ENCODE measurements at regions of chr13 and their contacts with region 1.

Region 1: GRCh38 chr13:28067491-28067890 is 32.9 kb downstream of the FLT3 start:
- DNase-seq: no peak
- ATAC-seq: no peak
- H3K4me3 ChIP-seq: no peak overlapping the region
- H3K27ac ChIP-seq: no peak overlapping the region
- H3K4me1 ChIP-seq: no peaks in the 10 kb centered on the region
- H3K27me3 ChIP-seq: peaks cover 8% of the 10 kb centered on the region
- CTCF ChIP-seq: no peak
- POLR2A ChIP-seq: no peak
- RAD21 ChIP-seq: no peak

Region 2: GRCh38 chr13:27896726-27897125 is 170.8 kb before region 1 on chr13:
- CTCF ChIA-PET with region 1: no interaction called
- POLR2A ChIA-PET with region 1: no interaction called
- dilution Hi-C with region 1: no loop called
- in situ Hi-C with region 1: no loop called
- intact Hi-C with region 1: no loop called
- DNase-seq: no peak
- ATAC-seq: no peak
- H3K4me3 ChIP-seq: no peak overlapping the region
- H3K27ac ChIP-seq: no peak overlapping the region
- H3K4me1 ChIP-seq: no peaks in the 10 kb centered on the region
- H3K27me3 ChIP-seq: no peaks in the 10 kb centered on the region; the same call in none of the 2 replicates
- CTCF ChIP-seq: no peak
- POLR2A ChIP-seq: no peak
- RAD21 ChIP-seq: no peak

Region 3: DNA sequence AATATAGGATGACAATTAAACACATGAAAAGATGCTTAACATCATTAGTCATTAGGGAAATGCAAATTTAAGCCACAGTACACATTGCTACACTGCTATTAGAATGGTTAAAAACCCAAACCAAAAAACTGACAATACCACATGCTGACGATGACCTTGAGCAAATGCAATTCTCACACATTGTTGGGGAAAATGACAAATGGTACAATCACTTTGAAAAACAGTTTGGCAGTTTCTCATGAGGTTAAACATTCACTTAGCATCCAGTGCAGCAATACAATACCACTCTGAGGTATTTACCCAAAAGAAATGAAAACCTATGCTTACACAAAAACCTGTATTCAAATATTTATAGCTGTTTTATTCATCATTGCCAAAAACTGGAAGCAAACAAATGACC is 21.6 kb after region 1 on chr13:
- CTCF ChIA-PET with region 1: no interaction called
- POLR2A ChIA-PET with region 1: no interaction called
- dilution Hi-C with region 1: no loop called
- in situ Hi-C with region 1: no loop called
- intact Hi-C with region 1: loop called (anchors 2 kb)
- DNase-seq: no peak
- ATAC-seq: no peak
- H3K4me3 ChIP-seq: no peak overlapping the region
- H3K27ac ChIP-seq: no peak overlapping the region
- H3K4me1 ChIP-seq: no peaks in the 10 kb centered on the region
- H3K27me3 ChIP-seq: peaks cover 9% of the 10 kb centered on the region
- CTCF ChIP-seq: no peak
- POLR2A ChIP-seq: no peak
- RAD21 ChIP-seq: no peak

Measured in IMR-90 (cell line).